Calu3 (cell line): ENCODE measurements at regions of chr6 and their contacts with region 1.

Region 1: GRCh38 chr6:83192871-83193746 is at the starts of genes PGM3 and RWDD2A:
- DNase-seq: peak; percentile 91
- H3K4me3 Mint-ChIP-seq: peak within 1 kb of the TSS; percentile 99
- H3K27ac Mint-ChIP-seq: peak within 1 kb of the TSS; percentile 94
- H3K4me1 Mint-ChIP-seq: no peaks in the 10 kb centered on the region
- H3K27me3 Mint-ChIP-seq: no peaks in the 10 kb centered on the region
- CTCF ChIP-seq: no peak
- total RNA-seq, gene PGM3: 41.2 and 46.6 TPM in 2 replicates
- total RNA-seq, gene RWDD2A: 3.2 and 4.0 TPM in 2 replicates

Region 2: GRCh38 chr6:82247634-82248232 is 945.4 kb before region 1 on chr6 and contains the start of gene IBTK:
- CTCF ChIA-PET with region 1: no interaction called
- intact Hi-C with region 1: loop called (anchors 5 kb)
- DNase-seq: peak; percentile 95
- H3K4me3 Mint-ChIP-seq: peak within 1 kb of the TSS; percentile 90
- H3K27ac Mint-ChIP-seq: peak within 1 kb of the TSS; percentile 99
- H3K4me1 Mint-ChIP-seq: peaks cover 19% of the 10 kb centered on the region
- H3K27me3 Mint-ChIP-seq: no peaks in the 10 kb centered on the region
- CTCF ChIP-seq: no peak
- total RNA-seq, gene IBTK: 48.3 and 54.9 TPM in 2 replicates

Region 3: GRCh38 chr6:83741089-83741488 is 548.0 kb after region 1 on chr6:
- CTCF ChIA-PET with region 1: no interaction called
- intact Hi-C with region 1: no loop called
- DNase-seq: no peak
- H3K4me3 Mint-ChIP-seq: no peak overlapping the region
- H3K27ac Mint-ChIP-seq: no peak overlapping the region
- H3K4me1 Mint-ChIP-seq: no peaks in the 10 kb centered on the region
- H3K27me3 Mint-ChIP-seq: no peaks in the 10 kb centered on the region
- CTCF ChIP-seq: no peak